ENCODE measurements at regions of chr7 and their contacts with region 1.

Region 1: GRCh38 chr7:4830176-4830575 is 31.7 kb downstream of the PAPOLB start:
- DNase-seq: peak; percentile 80
- H3K4me3 ChIP-seq: no peak overlapping the region
- H3K27ac ChIP-seq: no peak overlapping the region
- H3K4me1 ChIP-seq: no peaks in the 10 kb centered on the region
- H3K27me3 ChIP-seq: no peaks in the 10 kb centered on the region
- CTCF ChIP-seq: peak; percentile 98 to 100
- POLR2A ChIP-seq: no peak

Region 2: DNA sequence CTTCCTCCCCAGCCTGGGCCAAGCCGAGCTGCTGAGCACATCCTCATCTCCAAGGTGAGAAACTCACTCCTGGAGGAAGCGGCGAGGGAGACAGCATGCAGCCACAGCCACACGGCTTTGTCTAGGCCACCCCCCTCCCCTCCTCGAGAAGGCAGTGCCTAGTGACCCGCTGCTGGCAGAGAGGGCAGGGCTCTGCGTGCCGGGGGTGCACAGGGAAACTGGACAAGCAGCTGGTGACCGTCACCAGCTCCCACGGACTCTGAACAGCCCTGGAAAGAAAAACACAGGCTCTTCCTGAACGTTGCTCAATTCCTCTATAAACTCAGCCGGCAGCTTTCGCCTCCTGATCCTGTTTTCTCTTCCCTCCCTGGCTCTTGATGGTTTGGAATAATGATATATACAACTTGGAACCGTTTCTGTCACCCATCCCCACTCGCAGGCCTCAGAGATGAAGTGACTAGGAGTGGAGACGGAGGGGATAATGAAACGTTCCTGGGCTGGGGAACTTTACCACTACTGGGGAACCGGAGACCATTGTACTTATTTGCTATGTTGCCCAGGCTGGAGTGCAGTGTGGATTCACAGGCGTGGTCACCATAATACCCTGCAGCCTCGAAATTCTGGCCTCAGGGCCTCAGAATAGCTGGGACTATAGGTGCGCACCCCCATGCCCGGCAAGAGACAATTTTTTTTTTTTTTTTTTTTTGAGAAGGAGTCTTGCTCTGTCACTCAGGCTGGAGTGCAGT is 12.3 kb after region 1 on chr7:
- CTCF ChIA-PET with region 1: interaction called, 12 read pairs
- POLR2A ChIA-PET with region 1: interaction called, 4 read pairs
- dilution Hi-C with region 1: no loop called
- intact Hi-C with region 1: no loop called
- DNase-seq: peak; percentile 52
- H3K4me3 ChIP-seq: no peak overlapping the region
- H3K27ac ChIP-seq: no peak overlapping the region
- H3K4me1 ChIP-seq: no peaks in the 10 kb centered on the region
- H3K27me3 ChIP-seq: peaks cover 0 to 3% of the 10 kb centered on the region in 2 experiments
- CTCF ChIP-seq: no peak
- POLR2A ChIP-seq: no peak

Region 3: DNA sequence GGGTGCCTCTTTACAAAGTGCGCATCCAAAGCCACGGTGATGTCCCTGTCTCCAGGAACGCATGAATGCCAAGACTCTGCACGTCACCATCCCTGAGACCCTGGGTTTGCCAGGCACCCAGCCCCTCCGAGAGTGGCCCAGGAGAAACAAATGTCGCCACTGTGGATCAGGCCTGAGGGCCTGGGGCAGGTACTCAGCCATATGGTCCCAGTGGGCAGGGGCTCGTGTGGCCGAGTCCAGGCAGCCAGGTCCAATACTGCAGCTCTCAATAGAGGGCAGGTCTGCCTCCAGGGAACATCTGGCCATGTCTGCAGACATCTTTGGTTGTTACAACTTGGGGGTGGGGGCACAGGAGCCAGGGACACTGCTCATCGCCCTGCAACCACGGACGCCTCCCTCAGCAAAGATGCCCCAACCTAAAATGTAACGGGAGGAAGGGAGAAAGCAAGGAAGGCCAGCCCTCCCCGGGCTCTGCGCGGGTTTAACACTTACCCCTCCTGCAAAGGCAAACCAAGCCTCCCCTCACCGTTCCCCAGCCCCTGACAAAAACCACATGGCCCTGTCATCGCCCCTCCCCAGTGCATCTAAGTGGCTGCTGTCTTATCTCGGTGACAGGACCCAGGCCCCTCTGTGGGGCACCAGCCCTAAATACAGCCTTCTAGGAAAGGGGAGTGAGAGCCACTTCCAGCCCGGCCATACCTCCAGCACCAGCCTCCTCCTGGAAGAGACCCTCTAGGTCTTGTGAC is 41.9 kb after region 1 on chr7:
- CTCF ChIA-PET with region 1: no interaction called
- POLR2A ChIA-PET with region 1: no interaction called
- dilution Hi-C with region 1: no loop called
- intact Hi-C with region 1: no loop called
- DNase-seq: no peak
- H3K4me3 ChIP-seq: no peak overlapping the region
- H3K27ac ChIP-seq: no peak overlapping the region
- H3K4me1 ChIP-seq: no peaks in the 10 kb centered on the region
- H3K27me3 ChIP-seq: no peaks in the 10 kb centered on the region
- CTCF ChIP-seq: no peak
- POLR2A ChIP-seq: no peak

Region 4: GRCh38 chr7:4883374-4884144 is 53.4 kb after region 1 on chr7 and contains the start of gene RADIL:
- CTCF ChIA-PET with region 1: interaction called, 21 read pairs
- POLR2A ChIA-PET with region 1: no interaction called
- dilution Hi-C with region 1: no loop called
- intact Hi-C with region 1: loop called (anchors 1 kb)
- DNase-seq: peak; percentile 89
- H3K4me3 ChIP-seq: peak within 1 kb of the TSS; percentile 3 to 46 (median 9)
- H3K27ac ChIP-seq: no peak within 1 kb of the TSS
- H3K4me1 ChIP-seq: peaks cover 8% of the 10 kb centered on the region
- H3K27me3 ChIP-seq: no peaks in the 10 kb centered on the region
- CTCF ChIP-seq: peak; percentile 80 to 92
- POLR2A ChIP-seq: no peak
- total RNA-seq, gene RADIL: 1.0 and 2.5 TPM in 2 replicates

Region 5: DNA sequence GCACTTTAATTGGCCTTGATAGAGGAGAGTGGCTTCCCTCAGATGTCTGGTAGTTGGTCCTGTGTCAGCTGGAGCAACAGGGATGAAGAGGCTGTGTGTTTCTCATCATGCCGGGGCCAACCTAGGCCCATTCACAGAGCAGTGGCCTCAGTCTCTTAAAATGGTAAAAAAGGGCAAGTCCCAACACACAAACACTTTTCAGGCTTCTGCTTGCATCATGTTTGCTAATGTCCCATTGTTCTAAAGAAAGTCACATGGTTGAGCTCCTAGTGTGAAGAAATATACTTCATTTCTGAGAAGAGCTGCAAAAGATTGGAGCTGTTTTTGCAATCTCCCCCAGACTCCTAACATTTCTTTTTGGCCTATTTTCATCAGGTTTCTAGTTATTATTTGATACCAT is 174.9 kb after region 1 on chr7:
- CTCF ChIA-PET with region 1: no interaction called
- POLR2A ChIA-PET with region 1: no interaction called
- dilution Hi-C with region 1: no loop called
- intact Hi-C with region 1: no loop called
- DNase-seq: no peak
- H3K4me3 ChIP-seq: no peak overlapping the region
- H3K27ac ChIP-seq: no peak overlapping the region
- H3K4me1 ChIP-seq: no peaks in the 10 kb centered on the region
- H3K27me3 ChIP-seq: no peaks in the 10 kb centered on the region
- CTCF ChIP-seq: no peak
- POLR2A ChIP-seq: no peak

Region 6: DNA sequence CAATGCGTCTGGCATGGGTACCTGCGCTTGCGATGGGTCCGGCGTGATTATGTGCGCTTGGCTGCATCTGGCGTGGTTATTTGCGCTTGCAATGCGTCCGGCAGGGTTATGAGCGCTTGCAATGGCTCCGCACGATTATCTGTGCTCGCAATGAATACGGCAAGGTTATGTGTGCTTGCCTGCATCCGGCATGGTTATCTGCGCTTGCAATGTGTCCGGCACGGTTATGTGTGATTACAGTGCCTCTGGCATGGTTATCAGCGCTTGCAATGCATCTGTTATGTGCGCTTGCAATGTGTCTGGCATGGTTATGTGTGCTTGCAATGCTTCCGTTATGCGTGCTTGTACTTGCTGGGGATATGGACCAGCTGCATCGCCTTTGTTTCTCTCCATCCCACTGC is 253.1 kb after region 1 on chr7:
- CTCF ChIA-PET with region 1: interaction called, 121 read pairs
- POLR2A ChIA-PET with region 1: no interaction called
- dilution Hi-C with region 1: no loop called
- intact Hi-C with region 1: loop called (anchors 1 kb)
- DNase-seq: no peak
- H3K4me3 ChIP-seq: no peak overlapping the region
- H3K27ac ChIP-seq: no peak overlapping the region
- H3K4me1 ChIP-seq: no peaks in the 10 kb centered on the region
- H3K27me3 ChIP-seq: no peaks in the 10 kb centered on the region
- CTCF ChIP-seq: no peak
- POLR2A ChIP-seq: no peak

Region 7: GRCh38 chr7:5177060-5177459 is 346.9 kb after region 1 on chr7:
- CTCF ChIA-PET with region 1: interaction called, 7 read pairs
- POLR2A ChIA-PET with region 1: no interaction called
- dilution Hi-C with region 1: no loop called
- intact Hi-C with region 1: loop called (anchors 1 kb)
- DNase-seq: peak; percentile 42
- H3K4me3 ChIP-seq: no peak overlapping the region
- H3K27ac ChIP-seq: no peak overlapping the region
- H3K4me1 ChIP-seq: no peaks in the 10 kb centered on the region
- H3K27me3 ChIP-seq: no peaks in the 10 kb centered on the region
- CTCF ChIP-seq: no peak
- POLR2A ChIP-seq: no peak

Region 8: GRCh38 chr7:5396999-5397663 is 567.0 kb after region 1 on chr7:
- CTCF ChIA-PET with region 1: no interaction called
- POLR2A ChIA-PET with region 1: no interaction called
- dilution Hi-C with region 1: no loop called
- intact Hi-C with region 1: no loop called
- DNase-seq: peak; percentile 21
- H3K4me3 ChIP-seq: no peak overlapping the region
- H3K27ac ChIP-seq: no peak overlapping the region
- H3K4me1 ChIP-seq: no peaks in the 10 kb centered on the region
- H3K27me3 ChIP-seq: no peaks in the 10 kb centered on the region
- CTCF ChIP-seq: no peak
- POLR2A ChIP-seq: no peak